ENCODE measurements at regions of chr3 and their contacts with region 1.

Region 1: GRCh38 chr3:36957862-36958686 is 13.2 kb upstream of the TRANK1 start:
- DNase-seq: no peak
- ATAC-seq: no peak
- H3K4me3 Mint-ChIP-seq: no peak overlapping the region
- H3K27ac Mint-ChIP-seq: peak overlapping the region; percentile 63
- H3K4me1 Mint-ChIP-seq: peaks cover 14% of the 10 kb centered on the region
- H3K27me3 Mint-ChIP-seq: peaks cover 2% of the 10 kb centered on the region

Region 2: DNA sequence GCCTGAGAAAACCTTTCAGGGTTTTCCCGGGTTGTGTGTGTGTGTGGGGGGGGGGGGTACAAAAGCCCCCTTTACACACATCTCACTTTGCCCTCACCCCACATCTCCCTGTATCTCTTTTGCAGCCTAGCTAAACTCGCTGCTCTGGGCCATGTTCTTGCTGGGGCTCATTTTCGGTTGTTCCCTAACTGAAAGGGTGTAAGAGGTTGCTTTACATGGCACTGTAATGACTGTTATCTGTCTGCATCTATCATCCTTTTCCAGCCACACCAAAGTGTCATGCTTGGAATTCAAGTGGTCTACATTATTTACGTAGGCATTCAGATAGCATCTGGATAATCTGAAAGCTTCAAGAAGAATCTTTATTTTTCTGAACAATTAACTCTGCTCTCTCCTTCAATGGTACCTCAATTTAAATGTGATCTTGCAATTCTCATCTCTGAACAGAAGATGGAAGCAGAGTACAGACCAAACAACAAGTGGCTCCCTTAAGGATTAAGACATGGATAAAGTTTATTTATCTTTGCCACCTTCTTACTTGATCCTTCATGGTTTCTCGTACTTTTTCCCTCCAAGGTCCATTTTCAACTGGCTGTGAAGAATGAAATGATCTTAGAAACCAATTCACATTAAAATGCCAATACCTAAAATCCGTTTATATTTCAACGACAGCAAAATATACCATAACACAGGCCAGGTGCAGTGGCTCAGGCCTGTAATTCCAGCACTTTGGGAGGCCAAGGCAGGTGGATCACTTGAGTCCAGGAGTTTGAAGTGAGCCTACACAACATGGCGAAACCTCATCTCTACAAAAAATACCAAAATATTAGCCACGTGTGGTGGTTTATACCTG is 228.6 kb before region 1 on chr3:
- CTCF ChIA-PET with region 1: interaction called, 19 read pairs
- POLR2A ChIA-PET with region 1: interaction called, 4 read pairs
- DNase-seq: no peak
- ATAC-seq: no peak
- H3K4me3 Mint-ChIP-seq: no peak overlapping the region
- H3K27ac Mint-ChIP-seq: no peak overlapping the region
- H3K4me1 Mint-ChIP-seq: no peaks in the 10 kb centered on the region
- H3K27me3 Mint-ChIP-seq: peaks cover 18% of the 10 kb centered on the region

Region 3: DNA sequence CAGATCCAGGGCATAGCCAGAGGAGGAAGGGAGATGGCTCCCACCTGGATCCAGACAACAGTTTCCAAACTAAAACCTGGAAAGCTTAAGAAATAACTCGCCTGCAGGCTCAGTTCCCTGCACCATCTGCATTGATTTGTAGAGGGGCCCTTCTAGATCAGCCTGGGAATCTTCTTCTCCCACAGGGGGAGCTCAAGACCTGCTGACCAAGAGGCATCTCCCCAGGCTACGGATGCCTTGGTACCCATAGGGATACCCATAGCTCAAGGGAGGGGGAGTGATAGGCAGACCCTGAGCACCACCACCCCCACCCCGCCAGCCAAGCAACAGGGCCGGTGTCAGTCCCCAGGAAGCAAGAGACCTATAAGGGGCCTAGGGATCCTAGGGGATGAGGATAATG is 165.7 kb before region 1 on chr3:
- CTCF ChIA-PET with region 1: interaction called, 19 read pairs
- POLR2A ChIA-PET with region 1: no interaction called
- DNase-seq: peak; percentile 39
- ATAC-seq: no peak
- H3K4me3 Mint-ChIP-seq: no peak overlapping the region
- H3K27ac Mint-ChIP-seq: no peak overlapping the region
- H3K4me1 Mint-ChIP-seq: no peaks in the 10 kb centered on the region
- H3K27me3 Mint-ChIP-seq: peaks cover 11% of the 10 kb centered on the region

Region 4: DNA sequence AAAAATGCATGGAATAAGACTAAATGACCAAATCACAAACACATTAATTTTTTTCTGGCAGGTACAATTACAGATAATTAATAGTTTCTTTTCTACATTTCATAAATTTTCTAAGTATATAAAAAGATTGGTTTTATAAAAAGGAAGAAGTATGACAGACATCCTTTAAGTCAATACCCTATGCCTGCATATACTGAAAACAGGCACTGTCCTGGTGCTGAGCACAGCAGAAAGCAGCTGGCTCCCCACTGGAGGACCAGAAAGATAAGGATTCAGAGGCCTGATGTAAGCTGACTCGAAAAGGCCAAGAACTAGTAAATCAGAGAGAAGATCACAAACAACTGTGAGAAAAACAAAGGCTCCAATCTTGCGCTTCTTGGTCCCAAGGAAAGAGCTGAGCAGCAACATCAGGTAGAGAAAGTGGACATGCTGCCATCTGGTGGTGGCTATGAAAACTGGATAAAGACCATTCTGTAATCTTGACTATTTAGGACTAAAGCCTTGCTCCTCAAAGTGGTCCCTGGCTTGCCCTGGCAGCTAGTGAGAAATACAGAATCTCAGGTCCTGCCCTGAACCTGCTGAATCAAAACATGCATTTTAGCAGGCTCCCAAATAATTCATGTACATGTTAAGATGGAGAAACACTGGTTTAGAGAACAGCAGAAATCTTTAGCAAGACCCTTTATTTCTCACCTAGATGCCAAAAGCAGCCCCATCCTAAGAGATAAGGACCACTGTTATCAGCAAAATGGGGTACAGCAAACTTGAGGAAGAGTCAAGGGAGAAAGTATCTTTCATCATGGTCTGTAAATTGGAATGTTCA is 89.2 kb before region 1 on chr3:
- CTCF ChIA-PET with region 1: interaction called, 44 read pairs
- POLR2A ChIA-PET with region 1: no interaction called
- DNase-seq: peak; percentile 70
- ATAC-seq: peak; percentile 88
- H3K4me3 Mint-ChIP-seq: no peak overlapping the region
- H3K27ac Mint-ChIP-seq: no peak overlapping the region
- H3K4me1 Mint-ChIP-seq: peaks cover 9% of the 10 kb centered on the region
- H3K27me3 Mint-ChIP-seq: no peaks in the 10 kb centered on the region

Region 5: DNA sequence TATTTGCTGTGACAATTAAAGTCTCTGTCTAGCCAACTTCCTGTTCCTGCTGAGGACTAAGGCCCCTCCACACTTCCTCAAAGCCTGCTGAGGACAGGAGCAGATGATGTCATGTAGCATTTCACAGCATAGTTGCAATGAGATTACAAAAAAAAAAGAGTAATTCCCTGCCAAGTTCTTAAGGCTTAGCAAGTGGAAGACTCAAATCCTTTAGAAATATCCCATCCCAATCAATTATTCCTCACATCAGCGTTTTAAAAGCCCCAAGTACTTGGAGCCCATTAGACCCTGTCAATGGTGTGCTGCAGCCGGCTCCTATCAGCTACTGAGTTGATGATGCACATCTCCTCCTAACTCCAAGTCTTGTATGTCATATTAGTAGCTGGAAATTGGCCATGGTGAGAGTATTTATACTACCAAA is 64.9 kb before region 1 on chr3:
- CTCF ChIA-PET with region 1: interaction called, 25 read pairs
- POLR2A ChIA-PET with region 1: no interaction called
- DNase-seq: peak; percentile 46
- ATAC-seq: peak; percentile 73
- H3K4me3 Mint-ChIP-seq: no peak overlapping the region
- H3K27ac Mint-ChIP-seq: peak overlapping the region; percentile 72
- H3K4me1 Mint-ChIP-seq: peaks cover 39% of the 10 kb centered on the region
- H3K27me3 Mint-ChIP-seq: no peaks in the 10 kb centered on the region

Region 6: DNA sequence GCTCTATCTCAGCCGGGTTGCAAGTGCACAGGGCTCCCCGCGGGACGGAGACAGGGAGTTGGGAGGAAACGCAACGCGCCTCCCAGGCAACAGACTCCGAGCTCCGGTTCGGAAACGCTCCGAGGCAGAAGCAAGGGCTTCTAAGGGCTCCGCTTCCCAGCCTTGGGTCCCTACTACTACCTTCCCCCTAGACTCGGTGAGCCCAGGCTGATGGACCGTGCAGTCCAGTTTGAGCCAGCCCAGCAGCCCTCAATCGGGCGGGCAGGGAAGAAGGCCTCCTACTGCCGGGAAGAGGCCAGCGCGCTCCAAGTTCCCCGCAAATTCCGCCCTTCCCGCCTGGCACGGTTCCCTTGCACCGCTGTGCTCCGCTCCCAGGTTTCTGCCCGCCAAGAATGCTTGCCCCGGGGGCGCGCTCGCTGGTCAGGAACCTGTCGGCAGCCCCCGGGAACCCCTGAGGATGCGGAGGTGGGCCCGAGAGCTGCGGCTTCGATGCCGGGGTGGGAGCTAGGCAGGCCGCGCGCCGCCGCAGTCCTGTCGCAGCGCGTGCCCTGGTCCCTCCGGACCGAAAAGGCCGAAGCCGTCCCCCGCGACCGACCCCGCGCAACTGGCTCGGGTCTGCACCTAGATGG is 13.9 kb before region 1 on chr3:
- CTCF ChIA-PET with region 1: interaction called, 32 read pairs
- POLR2A ChIA-PET with region 1: interaction called, 4 read pairs
- DNase-seq: peak; percentile 34
- ATAC-seq: peak; percentile 60
- H3K4me3 Mint-ChIP-seq: peak overlapping the region; percentile 78
- H3K27ac Mint-ChIP-seq: peak overlapping the region; percentile 75
- H3K4me1 Mint-ChIP-seq: peaks cover 20% of the 10 kb centered on the region
- H3K27me3 Mint-ChIP-seq: no peaks in the 10 kb centered on the region

Region 7: GRCh38 chr3:36988356-36988755 is 30.3 kb after region 1 on chr3:
- CTCF ChIA-PET with region 1: interaction called, 14 read pairs
- POLR2A ChIA-PET with region 1: interaction called, 8 read pairs
- DNase-seq: no peak
- ATAC-seq: no peak
- H3K4me3 Mint-ChIP-seq: peak overlapping the region; percentile 50
- H3K27ac Mint-ChIP-seq: peak overlapping the region; percentile 22
- H3K4me1 Mint-ChIP-seq: peaks cover 39% of the 10 kb centered on the region
- H3K27me3 Mint-ChIP-seq: no peaks in the 10 kb centered on the region

Measured in activated CD8-positive, alpha-beta T cell treated with anti-CD3 and anti-CD28 coated beads, Interleukin-2, amount 10 ng/mL, durations not matched to agents 7 days and 5 days (primary cell).